ENCODE measurements at regions of chr19 and their contacts with region 1.

Region 1: DNA sequence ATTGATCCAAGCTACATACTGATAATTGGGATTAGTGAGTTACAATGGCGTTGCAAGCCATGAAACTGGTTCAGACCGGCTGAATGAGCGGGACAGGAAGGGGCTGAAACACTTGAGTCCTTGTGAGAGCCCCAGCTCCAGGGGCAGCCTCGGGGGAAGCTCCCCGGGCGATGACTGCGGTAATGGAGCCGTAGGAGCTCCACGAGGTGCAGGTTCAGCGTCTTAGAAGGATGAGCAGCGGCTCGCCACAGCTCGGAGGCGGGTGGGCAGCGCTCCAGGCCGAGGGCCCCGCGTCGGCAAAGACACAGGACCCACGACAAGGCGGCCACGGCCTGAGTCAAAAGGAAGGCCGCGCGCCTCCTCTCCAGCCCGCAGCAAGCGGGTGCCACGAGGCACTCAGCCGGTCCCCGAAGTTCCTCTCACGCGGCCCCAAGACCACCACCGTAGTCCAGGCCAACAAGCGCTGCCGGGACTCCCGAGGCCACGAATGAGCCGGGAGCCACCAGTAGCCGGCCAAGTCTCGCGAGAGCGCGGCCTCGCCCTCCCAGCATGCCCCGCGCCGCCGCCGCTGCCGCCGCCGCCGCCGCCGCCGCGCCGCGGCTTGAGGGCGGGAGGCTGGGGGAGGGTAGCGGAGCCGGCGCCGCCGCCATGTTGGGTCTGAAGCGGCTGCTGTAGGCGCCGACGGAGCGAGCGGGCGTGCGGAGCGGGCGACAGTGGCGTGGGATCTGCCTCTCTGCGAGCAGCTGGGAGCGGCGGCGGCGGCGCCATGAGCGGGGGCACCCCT is at the start of gene LSM14A:
- DNase-seq: peak; percentile 90 to 97 (median 95)
- ATAC-seq: peak; percentile 94
- H3K4me3 ChIP-seq: peak within 1 kb of the TSS; percentile 94
- H3K4me3 Mint-ChIP-seq: peak within 1 kb of the TSS; percentile 91 to 100 (median 96)
- H3K27ac ChIP-seq: peak within 1 kb of the TSS; percentile 95
- H3K27ac Mint-ChIP-seq: peak within 1 kb of the TSS; percentile 96 to 99 (median 99)
- H3K4me1 ChIP-seq: peaks cover 27 to 29% of the 10 kb centered on the region in 2 donors
- H3K4me1 Mint-ChIP-seq: peaks cover 29 to 51% (median 44%) of the 10 kb centered on the region in 7 donors
- H3K27me3 ChIP-seq: no peaks in the 10 kb centered on the region
- H3K27me3 Mint-ChIP-seq: no peaks in the 10 kb centered on the region
- total RNA-seq, gene LSM14A: 124 to 189 (median 166) TPM

Region 2: GRCh38 chr19:33612928-33613619 is 559.0 kb before region 1 on chr19:
- CTCF ChIA-PET with region 1: no interaction called
- POLR2A ChIA-PET with region 1: no interaction called
- intact Hi-C with region 1: no loop called
- DNase-seq: no peak
- ATAC-seq: no peak
- H3K4me3 ChIP-seq: no peak overlapping the region
- H3K4me3 Mint-ChIP-seq: no peak overlapping the region
- H3K27ac ChIP-seq: no peak overlapping the region
- H3K27ac Mint-ChIP-seq: no peak overlapping the region
- H3K4me1 ChIP-seq: no peaks in the 10 kb centered on the region
- H3K4me1 Mint-ChIP-seq: no peaks in the 10 kb centered on the region
- H3K27me3 ChIP-seq: no peaks in the 10 kb centered on the region
- H3K27me3 Mint-ChIP-seq: peaks cover 0 to 47% (median 17%) of the 10 kb centered on the region in 5 donors

Region 3: GRCh38 chr19:34096020-34096915 is 75.8 kb before region 1 on chr19:
- CTCF ChIA-PET with region 1: no interaction called
- POLR2A ChIA-PET with region 1: no interaction called
- intact Hi-C with region 1: no loop called
- DNase-seq: peak in 5 of 9 donors; percentile 7 to 36 (median 25)
- ATAC-seq: peak; percentile 53
- H3K4me3 ChIP-seq: no peak overlapping the region
- H3K4me3 Mint-ChIP-seq: peak overlapping the region in 2 of 10 donors; percentile 49 to 56
- H3K27ac ChIP-seq: no peak overlapping the region
- H3K27ac Mint-ChIP-seq: peak overlapping the region in 1 of 9 donors; percentile 33
- H3K4me1 ChIP-seq: no peaks in the 10 kb centered on the region
- H3K4me1 Mint-ChIP-seq: peaks cover 0 to 5% (median 0%) of the 10 kb centered on the region in 7 donors
- H3K27me3 ChIP-seq: no peaks in the 10 kb centered on the region
- H3K27me3 Mint-ChIP-seq: peaks cover 5 to 27% (median 9%) of the 10 kb centered on the region in 5 donors

Region 4: DNA sequence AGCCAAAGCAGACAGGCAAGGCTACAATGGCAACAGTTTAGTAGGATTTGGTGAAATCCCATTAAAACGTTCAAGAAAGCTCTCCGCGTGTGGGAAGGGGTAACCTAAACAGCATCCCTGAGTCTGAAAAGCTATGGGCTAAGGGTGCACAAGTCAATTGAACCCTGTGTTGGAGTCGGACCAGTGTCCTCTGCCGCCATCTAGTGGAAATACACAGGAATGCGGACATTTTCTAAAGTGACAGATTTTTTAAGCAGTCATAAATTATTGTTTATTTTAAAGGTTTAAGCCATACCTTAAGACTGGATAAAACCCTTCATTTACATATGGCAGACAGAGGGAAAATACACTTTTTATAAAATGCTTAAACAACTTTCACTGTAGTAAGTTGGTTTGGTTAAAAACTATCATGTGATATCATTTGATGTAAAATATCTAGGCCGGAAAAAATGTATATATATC is 26.3 kb before region 1 on chr19:
- CTCF ChIA-PET with region 1: no interaction called
- POLR2A ChIA-PET with region 1: no interaction called
- intact Hi-C with region 1: no loop called
- DNase-seq: peak; percentile 11 to 68 (median 60)
- ATAC-seq: peak; percentile 85
- H3K4me3 ChIP-seq: no peak overlapping the region
- H3K4me3 Mint-ChIP-seq: no peak overlapping the region
- H3K27ac ChIP-seq: no peak overlapping the region
- H3K27ac Mint-ChIP-seq: no peak overlapping the region
- H3K4me1 ChIP-seq: no peaks in the 10 kb centered on the region
- H3K4me1 Mint-ChIP-seq: peaks cover 0 to 4% (median 0%) of the 10 kb centered on the region in 7 donors
- H3K27me3 ChIP-seq: no peaks in the 10 kb centered on the region
- H3K27me3 Mint-ChIP-seq: peaks cover 0 to 2% (median 0%) of the 10 kb centered on the region in 5 donors

Region 5: GRCh38 chr19:34188408-34188807 is 16.3 kb after region 1 on chr19:
- CTCF ChIA-PET with region 1: interaction called, 4 read pairs
- POLR2A ChIA-PET with region 1: interaction called, 8 read pairs
- intact Hi-C with region 1: loop called in 1 of 2 experiments (anchors 2 kb)
- DNase-seq: no peak
- ATAC-seq: no peak
- H3K4me3 ChIP-seq: no peak overlapping the region
- H3K4me3 Mint-ChIP-seq: peak overlapping the region in 8 of 10 donors; percentile 8 to 72 (median 54)
- H3K27ac ChIP-seq: no peak overlapping the region
- H3K27ac Mint-ChIP-seq: peak overlapping the region in 3 of 9 donors; percentile 35 to 54 (median 49)
- H3K4me1 ChIP-seq: peaks cover 48 to 50% of the 10 kb centered on the region in 2 donors
- H3K4me1 Mint-ChIP-seq: peaks cover 47 to 83% (median 79%) of the 10 kb centered on the region in 7 donors
- H3K27me3 ChIP-seq: no peaks in the 10 kb centered on the region
- H3K27me3 Mint-ChIP-seq: no peaks in the 10 kb centered on the region

Region 6: DNA sequence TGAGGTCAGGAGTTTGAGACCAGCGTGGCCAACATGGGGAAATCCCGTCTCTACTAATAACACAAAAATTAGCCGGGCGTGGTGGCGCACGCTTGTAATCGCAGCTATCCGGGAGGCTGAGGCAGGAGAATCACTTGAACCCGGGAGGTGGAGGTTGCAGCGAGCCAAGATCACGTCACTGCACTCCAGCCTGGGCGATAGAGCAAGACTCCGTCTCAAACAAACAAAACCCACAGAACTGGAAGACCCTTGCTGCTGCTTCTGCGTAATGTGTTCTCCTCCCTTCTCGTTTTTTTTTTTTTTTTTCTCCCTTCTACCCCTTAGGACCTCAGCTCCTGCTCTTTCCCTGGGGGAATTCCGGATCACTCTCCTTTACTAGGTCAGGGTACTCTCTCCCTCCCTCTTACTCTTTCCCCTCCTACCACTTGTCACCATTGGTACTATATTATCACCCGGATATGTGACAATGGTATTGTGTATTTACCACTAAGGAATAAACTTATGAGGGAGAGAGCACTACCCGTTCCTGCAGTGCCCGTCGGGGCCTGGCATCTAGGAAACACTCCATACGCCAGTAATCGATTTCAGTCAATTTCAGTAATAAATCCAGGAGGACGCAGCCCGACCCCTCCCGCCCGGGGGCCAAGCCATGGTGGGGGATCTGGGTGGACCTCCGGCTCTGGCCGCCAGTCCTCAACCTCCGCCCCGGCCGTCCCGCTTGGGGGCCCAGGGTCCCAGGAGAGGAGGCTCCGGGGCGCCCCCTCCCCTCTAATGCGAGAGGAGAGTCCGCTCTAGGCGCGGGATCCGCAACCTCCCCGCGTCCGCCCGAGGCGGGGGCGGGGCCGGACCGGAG is 81.9 kb after region 1 on chr19:
- CTCF ChIA-PET with region 1: no interaction called
- POLR2A ChIA-PET with region 1: interaction called, 3 read pairs
- intact Hi-C with region 1: loop called in 1 of 2 experiments (anchors 5 kb)
- DNase-seq: peak in 7 of 9 donors; percentile 75 to 88 (median 86)
- ATAC-seq: peak; percentile 51
- H3K4me3 ChIP-seq: peak overlapping the region; percentile 72
- H3K4me3 Mint-ChIP-seq: peak overlapping the region; percentile 86 to 100 (median 96)
- H3K27ac ChIP-seq: peak overlapping the region; percentile 97
- H3K27ac Mint-ChIP-seq: peak overlapping the region; percentile 94 to 100 (median 97)
- H3K4me1 ChIP-seq: peaks cover 6 to 27% of the 10 kb centered on the region in 2 donors
- H3K4me1 Mint-ChIP-seq: peaks cover 12 to 48% (median 36%) of the 10 kb centered on the region in 7 donors
- H3K27me3 ChIP-seq: no peaks in the 10 kb centered on the region
- H3K27me3 Mint-ChIP-seq: no peaks in the 10 kb centered on the region

Region 7: GRCh38 chr19:34359140-34359953 is 187.3 kb after region 1 on chr19:
- CTCF ChIA-PET with region 1: no interaction called
- POLR2A ChIA-PET with region 1: interaction called, 4 read pairs
- intact Hi-C with region 1: loop called in 1 of 2 experiments (anchors 2 kb)
- DNase-seq: peak; percentile 77 to 99 (median 89)
- ATAC-seq: peak; percentile 95
- H3K4me3 ChIP-seq: peak overlapping the region; percentile 55
- H3K4me3 Mint-ChIP-seq: peak overlapping the region; percentile 80 to 93 (median 90)
- H3K27ac ChIP-seq: peak overlapping the region; percentile 66
- H3K27ac Mint-ChIP-seq: peak overlapping the region; percentile 87 to 95 (median 94)
- H3K4me1 ChIP-seq: peaks cover 11 to 15% of the 10 kb centered on the region in 2 donors
- H3K4me1 Mint-ChIP-seq: peaks cover 18 to 62% (median 27%) of the 10 kb centered on the region in 7 donors
- H3K27me3 ChIP-seq: no peaks in the 10 kb centered on the region
- H3K27me3 Mint-ChIP-seq: no peaks in the 10 kb centered on the region

Measured in naive thymus-derived CD4-positive, alpha-beta T cell (primary cell).